ENCODE measurements at regions of chr4 and their contacts with region 1.

Region 1: GRCh38 chr4:8428293-8429097 is 12.0 kb downstream of the ACOX3 start:
- DNase-seq: peak; percentile 76 to 88 (median 86)
- H3K4me3 ChIP-seq: peak overlapping the region; percentile 49 to 94 (median 72)
- H3K4me3 Mint-ChIP-seq: peak overlapping the region; percentile 95 to 98
- H3K27ac ChIP-seq: peak overlapping the region; percentile 44 to 83
- H3K27ac Mint-ChIP-seq: peak overlapping the region; percentile 90 to 98 (median 95)
- H3K4me1 ChIP-seq: peaks cover 14 to 21% of the 10 kb centered on the region in 2 donors
- H3K4me1 Mint-ChIP-seq: peaks cover 22% of the 10 kb centered on the region
- H3K27me3 ChIP-seq: no peaks in the 10 kb centered on the region
- H3K27me3 Mint-ChIP-seq: no peaks in the 10 kb centered on the region
- CTCF ChIP-seq: peak; percentile 38

Region 2: DNA sequence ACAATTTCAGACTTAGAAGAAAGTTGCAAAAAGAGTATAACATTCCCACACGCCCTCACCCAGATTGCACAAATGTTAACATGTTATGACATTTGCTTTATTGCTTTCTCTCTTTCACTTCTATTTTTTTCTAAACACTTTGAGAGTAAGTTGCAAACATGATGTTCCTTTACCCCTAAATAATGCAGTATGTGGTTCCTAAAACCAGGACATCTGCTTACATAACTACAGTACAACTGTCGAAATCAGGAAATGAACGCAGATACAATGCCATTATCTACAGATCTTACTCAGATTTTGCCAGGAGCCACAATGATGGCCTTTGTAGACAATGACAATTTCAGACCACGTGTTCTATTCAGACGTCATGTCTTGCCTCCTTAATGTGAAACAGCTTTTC is 207.0 kb before region 1 on chr4:
- intact Hi-C with region 1: no loop called
- DNase-seq: peak; percentile 90 to 98 (median 94)
- H3K4me3 ChIP-seq: peak overlapping the region in 1 of 3 experiments; percentile 58
- H3K4me3 Mint-ChIP-seq: peak overlapping the region in 1 of 2 donors; percentile 61
- H3K27ac ChIP-seq: peak overlapping the region; percentile 80 to 90
- H3K27ac Mint-ChIP-seq: peak overlapping the region; percentile 96 to 99 (median 98)
- H3K4me1 ChIP-seq: peaks cover 56 to 69% of the 10 kb centered on the region in 2 donors
- H3K4me1 Mint-ChIP-seq: peaks cover 55% of the 10 kb centered on the region
- H3K27me3 ChIP-seq: no peaks in the 10 kb centered on the region
- H3K27me3 Mint-ChIP-seq: peaks cover 1 to 7% (median 2%) of the 10 kb centered on the region in 3 donors
- CTCF ChIP-seq: no peak

Region 3: GRCh38 chr4:8351931-8352367 is 76.5 kb before region 1 on chr4:
- intact Hi-C with region 1: no loop called
- DNase-seq: no peak
- H3K4me3 ChIP-seq: no peak overlapping the region
- H3K4me3 Mint-ChIP-seq: no peak overlapping the region
- H3K27ac ChIP-seq: no peak overlapping the region
- H3K27ac Mint-ChIP-seq: no peak overlapping the region
- H3K4me1 ChIP-seq: peaks cover 4 to 6% of the 10 kb centered on the region in 2 donors
- H3K4me1 Mint-ChIP-seq: peaks cover 11% of the 10 kb centered on the region
- H3K27me3 ChIP-seq: no peaks in the 10 kb centered on the region
- H3K27me3 Mint-ChIP-seq: peaks cover 0 to 5% (median 2%) of the 10 kb centered on the region in 3 donors
- CTCF ChIP-seq: no peak

Region 4: DNA sequence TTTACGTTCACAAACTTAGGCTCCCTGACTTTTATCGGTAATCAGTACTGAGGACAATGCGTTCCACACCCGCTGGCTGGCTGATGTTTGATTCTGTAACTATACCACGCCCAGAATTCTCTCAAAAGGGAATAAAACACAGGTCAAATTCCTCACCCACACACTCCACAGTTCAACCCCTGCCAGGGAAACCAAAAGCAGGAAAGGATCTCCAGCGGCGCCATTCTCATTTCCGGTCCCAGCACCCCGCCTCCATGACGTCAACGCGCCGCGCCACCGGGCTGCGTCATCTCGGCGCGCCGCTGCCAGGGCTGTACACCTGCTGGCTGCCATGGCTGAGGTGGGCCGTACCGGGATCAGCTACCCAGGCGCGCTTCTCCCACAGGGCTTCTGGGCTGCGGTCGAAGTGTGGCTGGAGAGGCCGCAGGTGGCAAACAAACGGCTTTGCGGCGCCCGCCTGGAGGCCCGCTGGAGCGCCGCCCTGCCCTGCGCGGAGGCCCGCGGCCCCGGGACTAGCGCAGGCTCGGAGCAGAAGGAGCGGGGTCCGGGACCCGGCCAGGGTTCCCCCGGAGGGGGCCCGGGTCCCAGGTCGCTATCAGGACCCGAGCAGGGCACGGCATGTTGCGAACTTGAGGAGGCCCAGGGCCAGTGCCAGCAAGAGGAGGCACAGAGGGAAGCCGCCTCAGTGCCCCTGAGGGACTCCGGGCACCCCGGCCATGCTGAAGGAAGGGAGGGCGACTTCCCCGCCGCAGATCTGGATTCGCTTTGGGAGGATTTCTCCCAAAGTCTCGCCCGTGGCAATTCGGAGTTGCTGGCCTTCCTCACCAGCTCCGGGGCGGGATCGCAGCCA is 12.2 kb after region 1 on chr4 and contains the starts of genes ACOX3 and TRMT44:
- intact Hi-C with region 1: loop called in 1 of 2 experiments (anchors 1 kb)
- DNase-seq: peak; percentile 88 to 92 (median 92)
- H3K4me3 ChIP-seq: peak within 1 kb of the TSS; percentile 63 to 88 (median 71)
- H3K4me3 Mint-ChIP-seq: peak within 1 kb of the TSS; percentile 87 to 98
- H3K27ac ChIP-seq: peak within 1 kb of the TSS; percentile 89 to 99
- H3K27ac Mint-ChIP-seq: peak within 1 kb of the TSS; percentile 98 to 100 (median 100)
- H3K4me1 ChIP-seq: peaks cover 27 to 32% of the 10 kb centered on the region in 2 donors
- H3K4me1 Mint-ChIP-seq: peaks cover 29% of the 10 kb centered on the region
- H3K27me3 ChIP-seq: no peaks in the 10 kb centered on the region
- H3K27me3 Mint-ChIP-seq: peaks cover 0 to 2% (median 0%) of the 10 kb centered on the region in 3 donors
- CTCF ChIP-seq: no peak
- polyA plus RNA-seq, gene ACOX3: 3.8 to 16.8 (median 13.3) TPM
- polyA plus RNA-seq, gene TRMT44: 4.9 to 7.5 (median 6.6) TPM

Region 5: DNA sequence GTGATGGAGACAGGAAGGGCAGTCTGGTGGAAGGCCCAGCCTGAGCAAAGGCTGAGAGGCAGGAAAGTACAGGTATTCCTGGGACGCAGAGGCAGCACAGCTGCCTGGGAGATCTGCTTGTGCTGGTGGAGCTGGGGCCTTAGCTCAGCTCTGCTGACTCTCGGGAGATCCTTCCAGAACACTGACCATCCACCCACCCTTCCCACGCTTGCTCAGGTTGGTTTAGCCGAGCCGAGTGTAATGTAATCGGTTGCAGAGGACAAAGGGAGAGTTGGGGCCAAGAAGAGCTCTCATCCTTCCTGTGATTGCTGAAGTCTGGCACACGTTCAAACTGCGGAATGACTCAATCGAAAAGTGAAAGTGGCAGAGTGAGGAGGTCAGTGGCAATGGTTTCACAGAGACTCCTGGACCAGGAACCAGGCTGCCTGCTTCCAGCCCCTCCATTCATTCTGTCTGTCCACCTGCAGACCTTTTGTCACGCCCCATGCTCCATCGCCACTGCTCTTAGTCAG is 108.6 kb after region 1 on chr4:
- intact Hi-C with region 1: no loop called
- DNase-seq: peak in 1 of 3 donors; percentile 0
- H3K4me3 ChIP-seq: no peak overlapping the region
- H3K4me3 Mint-ChIP-seq: peak overlapping the region in 1 of 2 donors; percentile 3
- H3K27ac ChIP-seq: no peak overlapping the region
- H3K27ac Mint-ChIP-seq: peak overlapping the region in 1 of 7 donors; percentile 41
- H3K4me1 ChIP-seq: peaks cover 2 to 7% of the 10 kb centered on the region in 2 donors
- H3K4me1 Mint-ChIP-seq: peaks cover 7% of the 10 kb centered on the region
- H3K27me3 ChIP-seq: no peaks in the 10 kb centered on the region
- H3K27me3 Mint-ChIP-seq: peaks cover 0 to 4% (median 2%) of the 10 kb centered on the region in 3 donors
- CTCF ChIP-seq: no peak

Measured in CD14-positive monocyte (primary cell).